ENCODE measurements at regions of chr9 and their contacts with region 1.

Region 1: DNA sequence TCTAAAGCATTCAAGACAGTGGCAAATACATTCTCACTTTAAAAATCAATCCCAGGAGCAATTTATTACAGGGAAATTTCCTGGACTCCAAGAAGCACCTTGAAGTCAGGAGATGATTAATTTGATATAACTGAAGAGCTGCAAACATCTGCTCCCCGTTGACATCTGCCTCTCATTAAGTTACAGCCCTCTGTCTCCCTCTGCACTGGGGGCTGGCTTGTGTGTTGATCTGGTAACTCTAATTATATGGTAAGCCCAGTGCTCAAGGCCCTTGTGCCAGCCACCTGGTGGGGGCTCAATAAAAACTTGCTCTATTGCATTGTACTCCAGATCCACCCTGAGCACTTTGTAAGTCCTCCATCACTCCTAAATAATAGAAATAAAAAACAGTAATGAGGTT is 131.1 kb upstream of the ZNF462 start:
- DNase-seq: no peak
- H3K4me3 ChIP-seq: no peak overlapping the region
- H3K27me3 ChIP-seq: no peaks in the 10 kb centered on the region; the same call in 1 of the 2 replicates
- CTCF ChIP-seq: no peak

Region 2: GRCh38 chr9:106675745-106676144 is 56.2 kb before region 1 on chr9:
- CTCF ChIA-PET with region 1: no interaction called
- POLR2A ChIA-PET with region 1: no interaction called
- DNase-seq: no peak
- H3K4me3 ChIP-seq: no peak overlapping the region
- H3K27me3 ChIP-seq: no peaks in the 10 kb centered on the region
- CTCF ChIP-seq: no peak

Region 3: DNA sequence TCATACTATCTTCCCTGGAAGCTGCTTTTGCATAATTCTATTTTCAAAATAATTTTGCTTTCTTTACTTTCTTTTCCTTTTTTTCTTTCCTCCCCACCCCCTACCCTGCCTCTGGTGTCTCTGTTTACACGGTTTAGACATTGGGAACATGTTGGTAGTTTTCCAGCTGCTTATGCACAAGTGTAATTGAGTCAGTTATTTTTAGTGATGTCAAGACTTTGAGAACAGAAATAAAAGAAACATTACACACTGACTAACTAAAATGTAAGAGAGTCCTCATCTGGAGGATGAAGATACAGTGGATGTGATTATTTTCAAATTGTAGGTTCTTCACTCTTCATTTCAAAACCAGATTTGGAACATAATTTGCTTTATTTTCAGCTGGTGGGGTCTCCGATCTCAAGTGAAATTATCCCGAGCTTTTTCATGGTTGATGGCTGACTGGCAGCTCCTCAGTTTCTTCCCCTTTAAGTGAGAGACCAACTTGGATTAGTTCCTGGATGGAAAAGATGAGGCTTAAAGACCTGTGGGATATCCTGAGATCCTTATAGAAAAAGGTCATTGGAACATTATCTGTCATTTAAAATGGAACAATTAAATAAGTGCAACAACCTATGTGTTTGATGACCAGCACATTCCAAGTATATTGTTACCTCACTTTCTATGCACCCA is 23.3 kb before region 1 on chr9:
- CTCF ChIA-PET with region 1: no interaction called
- POLR2A ChIA-PET with region 1: no interaction called
- DNase-seq: no peak
- H3K4me3 ChIP-seq: no peak overlapping the region
- H3K27me3 ChIP-seq: no peaks in the 10 kb centered on the region
- CTCF ChIP-seq: no peak

Region 4: DNA sequence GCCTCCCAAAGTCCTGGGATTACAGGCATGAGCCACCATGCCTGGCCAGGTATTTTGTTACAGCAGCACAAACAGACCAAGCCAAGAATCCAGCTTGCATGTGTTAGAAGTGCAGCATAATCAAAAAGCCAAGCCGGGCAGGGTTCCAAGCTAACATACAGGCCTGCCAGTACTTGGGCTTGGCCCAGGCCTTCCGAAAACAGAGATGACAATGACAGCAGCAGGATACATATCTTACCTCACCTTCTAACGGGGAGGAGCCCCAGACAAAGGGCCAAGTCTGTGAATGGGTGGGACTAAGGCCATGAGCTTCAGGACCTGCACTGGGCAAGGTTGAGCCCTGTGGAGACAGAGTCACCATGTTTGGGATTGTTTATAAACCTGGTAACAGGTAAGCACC is 39.7 kb after region 1 on chr9:
- CTCF ChIA-PET with region 1: no interaction called
- POLR2A ChIA-PET with region 1: interaction called, 14 read pairs
- DNase-seq: no peak
- H3K4me3 ChIP-seq: no peak overlapping the region
- H3K27me3 ChIP-seq: no peaks in the 10 kb centered on the region; the same call in 1 of the 2 replicates
- CTCF ChIP-seq: no peak

Measured in BJ (cell line).